ENCODE measurements at regions of chr9 and their contacts with region 1.

Region 1: DNA sequence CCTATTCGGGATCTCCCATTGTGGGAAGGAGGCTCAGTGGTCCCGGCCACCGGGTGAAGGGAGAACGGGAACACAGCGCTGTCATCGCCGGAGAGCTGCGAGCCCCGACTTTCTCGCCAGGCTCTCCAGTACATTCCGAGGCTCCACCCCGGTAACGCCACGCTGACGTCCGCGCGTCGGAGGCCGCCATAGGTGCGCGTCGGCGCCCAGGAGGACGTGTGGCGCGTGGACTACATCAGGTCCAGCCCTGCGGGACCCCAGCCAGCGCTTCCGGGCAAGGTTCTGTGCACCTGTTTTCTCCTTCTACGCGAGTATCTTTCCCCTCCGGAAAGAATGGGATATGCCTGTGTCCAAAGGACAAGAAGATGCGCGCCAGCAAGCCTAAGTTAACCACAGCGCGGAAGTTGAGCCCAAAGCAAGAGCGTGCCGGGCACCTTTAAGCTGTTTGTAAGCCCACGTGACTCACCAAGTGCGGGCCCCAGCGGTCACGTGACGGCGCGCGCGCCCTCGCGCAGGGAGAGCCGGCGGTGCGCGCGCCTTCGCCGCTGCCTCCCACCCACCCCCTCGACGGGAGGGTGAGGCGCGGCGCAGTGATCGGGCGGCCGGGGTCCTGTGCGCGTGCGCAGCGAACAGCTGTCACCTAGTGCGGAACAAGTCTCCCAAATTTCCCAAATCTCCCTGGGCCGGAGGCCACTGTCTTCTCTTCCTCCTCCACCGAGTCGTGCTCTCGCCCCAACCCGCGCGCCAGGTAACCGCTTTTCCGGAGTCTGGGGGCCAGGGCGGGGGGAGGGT is at the start of gene KDM4C:
- H3K4me3 ChIP-seq: peak within 1 kb of the TSS; percentile 91
- H3K27ac ChIP-seq: peak within 1 kb of the TSS; percentile 58
- H3K4me1 ChIP-seq: no peaks in the 10 kb centered on the region
- CTCF ChIP-seq: no peak

Region 2: DNA sequence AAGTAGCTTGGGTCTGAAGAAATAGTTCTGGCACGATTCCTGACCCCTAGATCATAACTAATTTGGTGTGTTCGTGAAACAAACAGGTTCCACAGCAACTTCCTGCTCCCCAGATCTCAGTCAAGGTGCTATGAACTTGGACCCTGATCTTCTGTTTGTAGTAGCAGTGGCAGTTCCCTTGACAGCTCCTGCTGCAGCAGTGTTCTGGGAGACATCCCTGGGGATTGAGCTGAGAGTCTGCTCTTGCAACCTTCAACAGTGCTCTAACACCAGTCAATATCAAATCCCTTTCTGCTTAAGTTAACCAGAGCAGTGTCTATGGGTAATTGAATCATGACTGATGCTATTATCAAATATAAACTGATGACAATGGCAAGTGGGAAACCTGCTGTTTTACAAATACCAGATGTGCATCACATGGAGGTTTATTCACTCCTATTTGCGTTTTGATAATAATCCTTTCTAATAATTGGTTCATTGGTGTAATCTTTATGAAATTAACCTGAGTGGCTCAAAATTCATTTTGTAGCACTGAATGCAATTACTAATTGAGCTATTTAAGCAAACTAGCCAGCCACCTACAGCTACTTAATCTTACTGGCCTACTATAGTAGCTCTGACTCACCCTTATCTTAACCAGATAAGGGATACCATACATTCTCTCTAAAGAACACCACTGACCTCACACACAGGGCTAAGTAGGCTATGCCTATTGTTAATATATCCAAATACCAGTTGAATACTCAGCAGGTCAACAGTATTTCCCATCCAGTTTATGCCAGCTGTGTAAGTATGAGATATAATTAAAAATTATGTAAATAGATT is 22.0 kb after region 1 on chr9:
- CTCF ChIA-PET with region 1: interaction called, 3 read pairs
- POLR2A ChIA-PET with region 1: interaction called, 14 read pairs
- H3K4me3 ChIP-seq: no peak overlapping the region
- H3K27ac ChIP-seq: no peak overlapping the region
- H3K4me1 ChIP-seq: peaks cover 2% of the 10 kb centered on the region; the same call in 1 of the 2 replicates
- CTCF ChIP-seq: no peak

Region 3: DNA sequence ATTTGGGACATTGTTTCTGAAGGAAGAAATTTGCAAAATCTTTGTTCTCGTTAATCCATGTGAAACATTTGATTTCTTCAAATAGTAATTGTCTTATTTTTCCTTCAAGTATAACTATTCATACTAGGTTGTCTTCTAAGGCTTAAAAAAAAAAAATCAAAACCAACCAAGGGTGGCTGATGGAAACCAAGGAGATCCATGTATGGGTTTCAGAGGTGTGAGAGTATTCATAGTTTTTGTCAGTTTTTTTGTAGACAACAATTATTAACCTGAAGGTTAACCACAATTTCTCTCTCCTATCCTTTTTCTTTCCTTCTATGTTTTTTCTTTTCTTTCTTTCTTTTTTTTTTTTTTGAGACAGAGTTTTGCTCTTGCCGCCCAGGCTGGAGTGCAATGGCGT is 35.6 kb after region 1 on chr9:
- CTCF ChIA-PET with region 1: no interaction called
- POLR2A ChIA-PET with region 1: no interaction called
- H3K4me3 ChIP-seq: no peak overlapping the region
- H3K27ac ChIP-seq: no peak overlapping the region
- H3K4me1 ChIP-seq: no peaks in the 10 kb centered on the region; the same call in 1 of the 2 replicates
- CTCF ChIP-seq: no peak

Region 4: GRCh38 chr9:6873857-6874256 is 116.2 kb after region 1 on chr9:
- CTCF ChIA-PET with region 1: no interaction called
- POLR2A ChIA-PET with region 1: no interaction called
- H3K4me3 ChIP-seq: no peak overlapping the region
- H3K27ac ChIP-seq: no peak overlapping the region
- H3K4me1 ChIP-seq: no peaks in the 10 kb centered on the region
- CTCF ChIP-seq: no peak

Measured in HEK293 (cell line).